ENCODE measurements at regions of chr5 and their contacts with region 1.

Region 1: GRCh38 chr5:111513131-111513520 is 791 bp upstream of the STARD4 start:
- H3K4me3 ChIP-seq: peak overlapping the region; percentile 95
- H3K27ac ChIP-seq: peak overlapping the region; percentile 98
- H3K4me1 ChIP-seq: peaks cover 22% of the 10 kb centered on the region
- CTCF ChIP-seq: no peak

Region 2: DNA sequence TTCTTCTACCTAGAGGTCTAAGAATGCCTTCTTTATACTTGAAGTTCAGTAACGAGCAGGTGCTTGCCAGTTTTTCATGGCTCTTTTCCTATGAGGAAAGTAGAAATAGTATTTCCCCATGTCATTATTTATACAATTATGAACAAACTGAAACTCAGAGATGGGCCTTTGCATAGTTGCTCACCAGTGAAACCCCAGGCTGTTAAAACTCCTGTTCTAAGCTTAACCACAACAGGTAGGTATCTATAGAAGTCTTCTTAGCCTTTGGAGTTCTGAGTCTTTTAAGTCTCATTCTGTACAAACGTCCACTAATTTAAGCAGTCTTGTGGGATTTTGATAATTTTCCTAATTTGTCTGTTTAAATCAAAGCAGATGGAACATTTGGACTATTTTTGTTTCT is 90.9 kb before region 1 on chr5:
- CTCF ChIA-PET with region 1: no interaction called
- POLR2A ChIA-PET with region 1: no interaction called
- H3K4me3 ChIP-seq: no peak overlapping the region
- H3K27ac ChIP-seq: no peak overlapping the region
- H3K4me1 ChIP-seq: no peaks in the 10 kb centered on the region; the same call in 1 of the 2 replicates
- CTCF ChIP-seq: no peak

Region 3: GRCh38 chr5:111488353-111488752 is 24.8 kb before region 1 on chr5:
- CTCF ChIA-PET with region 1: no interaction called
- POLR2A ChIA-PET with region 1: no interaction called
- H3K4me3 ChIP-seq: no peak overlapping the region
- H3K27ac ChIP-seq: no peak overlapping the region
- H3K4me1 ChIP-seq: no peaks in the 10 kb centered on the region
- CTCF ChIP-seq: no peak

Region 4: DNA sequence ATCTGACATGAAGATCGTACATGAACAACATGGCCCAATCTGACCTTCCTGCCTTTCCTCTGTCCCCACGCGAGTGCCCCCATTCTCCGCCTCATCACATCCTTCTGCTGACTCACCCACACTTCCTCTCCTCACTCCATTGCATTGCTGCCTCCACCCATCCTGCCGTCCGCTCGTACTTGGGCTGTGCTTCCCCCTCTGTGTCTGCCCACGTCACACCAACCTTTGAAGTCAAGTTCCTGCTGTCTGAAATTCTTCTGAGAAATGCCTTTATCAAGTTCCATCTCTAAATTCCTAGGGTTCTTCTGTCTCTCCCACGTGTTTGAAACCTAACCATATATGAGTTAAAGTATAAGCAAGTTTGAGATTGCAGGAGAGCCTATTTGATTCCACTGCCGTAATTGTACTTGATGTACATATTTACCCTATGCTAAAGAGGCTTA is 17.2 kb after region 1 on chr5:
- CTCF ChIA-PET with region 1: interaction called, 13 read pairs
- POLR2A ChIA-PET with region 1: no interaction called
- H3K4me3 ChIP-seq: no peak overlapping the region
- H3K27ac ChIP-seq: no peak overlapping the region
- H3K4me1 ChIP-seq: no peaks in the 10 kb centered on the region
- CTCF ChIP-seq: no peak

Region 5: GRCh38 chr5:111781200-111781599 is 268.1 kb after region 1 on chr5:
- CTCF ChIA-PET with region 1: no interaction called
- POLR2A ChIA-PET with region 1: no interaction called
- H3K4me3 ChIP-seq: no peak overlapping the region
- H3K27ac ChIP-seq: no peak overlapping the region
- H3K4me1 ChIP-seq: peaks cover 13% of the 10 kb centered on the region
- CTCF ChIP-seq: no peak